ENCODE measurements at regions of chr9 and their contacts with region 1.

Region 1: DNA sequence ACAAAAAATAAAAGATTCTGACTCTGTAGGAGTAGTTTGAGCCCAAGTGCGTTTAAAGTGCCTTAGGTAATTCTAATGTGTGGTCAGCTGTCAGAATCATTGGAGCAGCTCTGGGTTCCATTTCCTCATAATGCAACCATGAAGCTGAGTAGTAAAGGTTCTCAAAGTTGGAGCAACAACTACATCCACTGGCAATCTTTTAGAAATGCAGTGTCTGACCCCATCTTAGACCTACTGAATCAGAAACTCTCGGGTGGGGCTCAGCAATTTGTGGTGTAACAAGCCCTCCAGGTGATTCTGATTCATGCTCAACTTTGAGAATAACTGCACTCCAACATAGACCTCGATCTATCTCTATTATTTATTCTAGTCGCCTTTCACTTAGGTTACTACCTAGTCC is 7.6 kb upstream of the ALDH1A1 start:
- DNase-seq: peak; percentile 77
- H3K4me3 ChIP-seq: no peak overlapping the region
- H3K27ac ChIP-seq: no peak overlapping the region
- H3K4me1 ChIP-seq: peaks cover 7% of the 10 kb centered on the region
- H3K27me3 ChIP-seq: no peaks in the 10 kb centered on the region
- CTCF ChIP-seq: peak; percentile 24 to 48

Region 2: GRCh38 chr9:72871685-72872084 is 88.8 kb before region 1 on chr9:
- CTCF ChIA-PET with region 1: no interaction called
- dilution Hi-C with region 1: no loop called
- in situ Hi-C with region 1: no loop called
- intact Hi-C with region 1: loop called (anchors 1 kb)
- DNase-seq: peak; percentile 21
- H3K4me3 ChIP-seq: no peak overlapping the region
- H3K27ac ChIP-seq: no peak overlapping the region
- H3K4me1 ChIP-seq: no peaks in the 10 kb centered on the region
- H3K27me3 ChIP-seq: no peaks in the 10 kb centered on the region
- CTCF ChIP-seq: peak; percentile 19 to 52

Region 3: GRCh38 chr9:73023025-73023541 is 62.6 kb after region 1 on chr9:
- CTCF ChIA-PET with region 1: no interaction called
- dilution Hi-C with region 1: no loop called
- in situ Hi-C with region 1: no loop called
- intact Hi-C with region 1: loop called (anchors 2 kb)
- DNase-seq: peak; percentile 48
- H3K4me3 ChIP-seq: no peak overlapping the region
- H3K27ac ChIP-seq: no peak overlapping the region
- H3K4me1 ChIP-seq: no peaks in the 10 kb centered on the region
- H3K27me3 ChIP-seq: no peaks in the 10 kb centered on the region
- CTCF ChIP-seq: peak; percentile 87

Region 4: DNA sequence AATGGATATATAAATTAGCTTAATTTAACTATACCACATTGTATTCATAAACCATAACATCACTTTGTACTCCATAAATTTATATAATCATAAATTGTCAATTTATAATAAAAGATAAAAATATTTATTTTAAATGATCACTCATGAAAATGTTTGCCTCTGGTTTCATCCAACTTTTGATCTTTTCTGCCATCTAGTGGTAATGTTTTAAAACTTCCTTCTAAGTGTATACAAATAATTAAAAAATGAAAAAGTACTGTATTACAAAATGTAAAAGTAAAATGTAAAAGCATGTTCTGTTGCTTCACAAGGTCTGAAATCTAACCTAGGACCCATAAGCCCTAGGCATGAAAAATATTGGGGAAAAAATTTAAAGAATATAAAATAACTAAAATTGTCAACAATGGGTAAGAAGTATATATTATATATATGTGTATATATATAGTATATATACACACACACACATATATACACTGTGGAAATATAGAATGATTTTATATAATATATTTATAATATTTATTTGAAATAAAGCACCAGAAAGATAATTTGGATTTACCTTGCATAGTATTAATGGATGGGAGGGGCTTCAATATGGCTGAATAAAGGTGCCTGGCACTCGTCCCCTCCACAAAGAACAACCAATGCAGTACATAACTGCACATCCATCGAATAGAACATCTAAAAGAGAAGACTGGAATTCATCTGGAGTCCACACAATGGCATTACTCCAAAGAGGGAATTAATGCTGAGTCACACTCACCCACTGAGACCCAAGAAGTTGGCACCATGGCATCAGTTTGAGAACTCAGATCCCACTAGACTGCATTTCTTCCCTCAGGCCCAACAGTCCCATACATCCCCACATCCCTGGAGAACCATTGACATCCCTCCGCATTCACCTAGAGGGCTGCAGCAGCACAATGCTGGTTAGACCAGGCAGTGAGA is 223.7 kb after region 1 on chr9:
- CTCF ChIA-PET with region 1: no interaction called
- dilution Hi-C with region 1: no loop called
- in situ Hi-C with region 1: no loop called
- intact Hi-C with region 1: no loop called
- DNase-seq: no peak
- H3K4me3 ChIP-seq: no peak overlapping the region
- H3K27ac ChIP-seq: no peak overlapping the region
- H3K4me1 ChIP-seq: peaks cover 5% of the 10 kb centered on the region
- H3K27me3 ChIP-seq: peaks cover 3% of the 10 kb centered on the region
- CTCF ChIP-seq: peak; percentile 27 to 42